Activated naive CD4-positive, alpha-beta T cell treated with anti-CD3 and anti-CD28 coated beads, Interleukin-2, amount 10 ng/mL, durations not matched to agents 7 days and 5 days (primary cell): ENCODE measurements at regions of chr19 and their contacts with region 1.

Region 1: DNA sequence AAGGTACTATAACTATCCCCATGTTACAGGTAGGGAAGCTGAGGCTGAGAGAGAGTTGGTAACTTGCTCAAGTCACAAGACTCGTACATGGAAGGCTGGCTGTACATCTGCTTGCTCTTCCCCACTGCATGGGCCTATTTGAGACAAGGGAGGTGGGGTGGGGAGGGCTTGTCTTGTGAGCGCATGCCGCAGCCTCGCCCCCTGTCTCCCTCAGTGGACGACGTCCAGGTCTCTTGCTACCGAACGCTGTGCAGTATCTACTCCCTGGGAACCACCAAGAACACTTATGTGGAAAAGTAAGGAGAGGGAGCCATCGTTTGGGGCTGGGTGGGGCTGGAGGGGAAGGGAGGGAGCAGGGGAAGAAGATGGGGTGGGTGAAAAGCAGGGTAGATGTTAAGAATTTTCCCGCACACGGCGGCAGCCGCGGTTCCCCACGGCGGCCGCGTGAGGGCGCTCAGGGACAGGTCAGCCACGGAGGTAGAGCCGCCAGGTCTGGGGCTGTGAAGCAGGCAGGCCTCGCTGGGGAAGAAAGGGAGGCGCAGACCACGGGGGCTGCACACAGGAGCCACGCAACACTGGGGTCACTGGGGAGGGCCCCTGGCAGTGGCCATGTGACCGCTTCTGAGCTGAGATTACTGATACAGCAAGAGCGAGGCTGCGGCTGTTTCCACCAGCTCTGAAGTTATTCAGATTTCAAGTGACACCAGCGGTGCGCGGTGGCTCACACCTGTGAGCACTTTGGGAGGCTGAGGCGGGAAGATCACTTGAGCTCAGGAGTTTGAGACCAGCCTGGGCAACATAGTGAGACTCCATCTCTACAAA is 81.5 kb downstream of the RYR1 start:
- DNase-seq: peak; percentile 81
- H3K4me3 Mint-ChIP-seq: no peak overlapping the region
- H3K27ac Mint-ChIP-seq: peak overlapping the region; percentile 69
- H3K4me1 Mint-ChIP-seq: peaks cover 34% of the 10 kb centered on the region
- H3K27me3 Mint-ChIP-seq: peaks cover 33% of the 10 kb centered on the region

Region 2: DNA sequence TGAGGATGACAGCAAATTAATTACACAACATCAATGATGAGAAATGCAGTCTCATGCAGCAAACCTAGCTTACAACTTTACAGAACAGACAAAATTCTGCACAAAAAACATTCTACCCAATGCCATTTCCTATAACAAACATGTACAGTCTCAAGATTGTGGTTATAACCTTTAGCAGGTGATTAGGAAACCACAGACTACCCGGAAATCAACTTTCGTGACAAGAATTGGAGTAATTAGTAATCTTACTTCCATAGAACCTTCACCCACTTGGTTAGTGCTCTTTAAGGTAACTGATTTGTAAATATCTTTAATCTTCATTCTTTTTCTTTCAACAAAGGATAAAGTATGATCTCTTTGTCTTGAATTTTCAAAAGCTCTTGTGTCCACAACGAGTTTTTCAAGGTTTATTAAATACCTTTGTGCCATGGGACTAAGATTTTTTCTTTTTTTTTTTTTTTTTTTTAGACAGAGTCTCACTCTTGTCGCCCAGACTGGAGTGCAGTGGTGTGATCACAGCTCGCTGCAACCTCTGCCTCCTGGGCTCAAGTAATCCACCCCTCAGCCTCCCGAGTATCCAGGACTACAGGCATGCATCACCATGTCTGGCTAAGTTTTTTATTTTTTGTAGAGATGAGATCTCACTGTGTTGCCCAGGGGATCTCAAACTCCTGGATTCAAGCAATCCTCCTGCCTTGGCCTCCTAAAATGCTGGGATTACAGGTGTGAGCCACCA is 23.9 kb after region 1 on chr19:
- CTCF ChIA-PET with region 1: interaction called, 12 read pairs
- DNase-seq: peak; percentile 53
- H3K4me3 Mint-ChIP-seq: peak overlapping the region; percentile 63
- H3K27ac Mint-ChIP-seq: peak overlapping the region; percentile 99
- H3K4me1 Mint-ChIP-seq: peaks cover 57% of the 10 kb centered on the region
- H3K27me3 Mint-ChIP-seq: peaks cover 13% of the 10 kb centered on the region

Region 3: DNA sequence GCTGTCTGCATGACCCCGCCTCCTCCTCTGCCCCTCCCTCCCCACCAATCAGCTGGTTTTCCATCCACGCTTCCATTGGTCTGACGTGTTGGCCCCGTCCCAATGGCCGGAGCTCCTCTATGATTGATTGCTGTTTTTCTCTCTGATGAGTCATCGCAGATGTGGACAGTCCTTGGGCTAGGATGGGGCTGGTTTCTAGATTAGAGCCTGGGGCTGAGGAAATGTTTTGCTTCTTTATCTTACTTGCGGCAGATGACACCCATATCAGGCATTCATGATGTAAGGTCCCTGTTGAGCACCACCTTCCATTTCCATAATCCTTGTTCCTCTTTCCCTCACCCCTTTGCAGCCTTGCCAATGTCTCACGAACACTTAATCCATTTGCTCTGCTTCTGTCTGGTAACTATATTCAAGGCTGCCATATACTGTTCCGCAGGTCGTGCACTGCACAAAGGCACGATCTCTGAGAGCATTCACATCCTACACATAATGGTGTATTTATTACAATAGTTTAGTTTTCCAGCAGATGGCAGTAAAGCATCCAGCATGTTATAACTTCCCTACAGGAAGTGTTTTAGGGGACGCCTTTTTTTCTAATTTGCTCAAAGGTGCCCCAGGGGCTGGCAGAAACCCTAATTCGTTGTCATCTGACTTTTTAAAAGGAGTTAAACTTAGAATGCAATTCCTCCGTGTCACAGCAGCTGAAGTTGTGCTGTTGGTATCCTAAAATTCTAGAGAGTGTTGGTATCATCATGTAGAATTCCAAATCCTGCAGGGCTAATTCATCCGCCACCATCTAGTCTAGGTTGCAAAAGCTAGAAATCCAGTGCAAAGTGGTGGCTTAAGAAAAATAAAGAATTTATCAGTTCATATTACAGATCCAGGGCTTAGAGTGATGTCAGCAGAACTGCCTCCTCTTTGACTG is 29.3 kb after region 1 on chr19:
- CTCF ChIA-PET with region 1: interaction called, 12 read pairs
- DNase-seq: peak; percentile 42
- H3K4me3 Mint-ChIP-seq: peak overlapping the region; percentile 16
- H3K27ac Mint-ChIP-seq: peak overlapping the region; percentile 77
- H3K4me1 Mint-ChIP-seq: peaks cover 37% of the 10 kb centered on the region
- H3K27me3 Mint-ChIP-seq: peaks cover 6% of the 10 kb centered on the region

Region 4: GRCh38 chr19:38564981-38565690 is 50.1 kb after region 1 on chr19:
- CTCF ChIA-PET with region 1: no interaction called
- DNase-seq: peak; percentile 47
- H3K4me3 Mint-ChIP-seq: peak overlapping the region; percentile 59
- H3K27ac Mint-ChIP-seq: no peak overlapping the region
- H3K4me1 Mint-ChIP-seq: peaks cover 28% of the 10 kb centered on the region
- H3K27me3 Mint-ChIP-seq: peaks cover 72% of the 10 kb centered on the region

Region 5: DNA sequence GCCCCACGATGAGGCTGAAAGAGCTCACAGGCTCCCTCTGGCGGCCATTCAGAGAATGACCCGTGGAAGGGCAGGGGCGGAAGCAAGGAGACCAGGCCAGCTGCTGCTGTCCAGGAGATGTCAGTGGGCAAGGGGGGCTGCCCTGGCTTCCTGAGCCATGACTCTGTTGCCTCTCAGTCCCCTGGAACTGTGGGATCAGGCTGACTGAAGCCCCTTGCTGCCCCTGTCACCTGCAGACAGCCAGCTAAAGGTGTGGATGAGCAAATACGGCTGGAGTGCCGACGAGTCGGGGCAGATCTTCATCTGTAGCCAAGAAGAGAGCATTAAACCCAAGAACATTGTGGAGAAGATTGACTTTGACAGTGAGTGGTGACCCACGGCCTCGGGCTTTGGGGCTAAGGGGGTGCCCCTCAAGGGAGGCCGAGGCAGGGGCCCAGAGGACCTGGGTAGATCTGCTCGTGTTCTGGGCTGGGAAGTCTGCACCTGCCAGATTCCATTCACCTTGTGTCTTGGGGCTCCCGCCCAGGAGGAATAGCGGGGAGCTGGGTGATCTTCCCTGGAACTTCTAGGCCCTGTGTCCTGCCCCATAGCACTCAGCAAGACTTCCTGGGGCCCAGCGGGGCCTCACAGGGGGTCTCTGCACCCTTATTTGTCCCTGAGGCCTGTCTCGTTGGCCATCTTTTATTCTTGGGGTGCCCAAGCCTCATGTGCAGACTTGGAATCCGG is 119.9 kb after region 1 on chr19:
- CTCF ChIA-PET with region 1: interaction called, 69 read pairs
- DNase-seq: peak; percentile 83
- H3K4me3 Mint-ChIP-seq: no peak overlapping the region
- H3K27ac Mint-ChIP-seq: peak overlapping the region; percentile 74
- H3K4me1 Mint-ChIP-seq: peaks cover 45% of the 10 kb centered on the region
- H3K27me3 Mint-ChIP-seq: no peaks in the 10 kb centered on the region

Region 6: GRCh38 chr19:38658462-38659306 is 143.7 kb after region 1 on chr19:
- CTCF ChIA-PET with region 1: no interaction called
- DNase-seq: no peak
- H3K4me3 Mint-ChIP-seq: no peak overlapping the region
- H3K27ac Mint-ChIP-seq: peak overlapping the region; percentile 13
- H3K4me1 Mint-ChIP-seq: peaks cover 84% of the 10 kb centered on the region
- H3K27me3 Mint-ChIP-seq: no peaks in the 10 kb centered on the region